Panc1 (cell line): ENCODE measurements at regions of chr12 and their contacts with region 1.

Region 1: GRCh38 chr12:56468216-56469006 is at the start of gene SPRYD4:
- DNase-seq: peak; percentile 59
- ATAC-seq: peak; percentile 97
- H3K4me3 ChIP-seq: peak within 1 kb of the TSS; percentile 98 to 100
- H3K27ac ChIP-seq: peak within 1 kb of the TSS; percentile 100
- H3K4me1 ChIP-seq: peaks cover 9% of the 10 kb centered on the region
- H3K27me3 ChIP-seq: no peaks in the 10 kb centered on the region
- CTCF ChIP-seq: peak; percentile 78; the same call in 1 of the 2 replicates
- total RNA-seq, gene SPRYD4: 3.7 TPM

Region 2: GRCh38 chr12:56189176-56189917 is 279.1 kb before region 1 on chr12 and contains the start of gene SMARCC2:
- CTCF ChIA-PET with region 1: interaction called, 19 read pairs
- POLR2A ChIA-PET with region 1: no interaction called
- in situ Hi-C with region 1: no loop called
- intact Hi-C with region 1: no loop called
- DNase-seq: peak; percentile 64
- ATAC-seq: peak; percentile 91
- H3K4me3 ChIP-seq: peak within 1 kb of the TSS; percentile 77 to 98
- H3K27ac ChIP-seq: peak within 1 kb of the TSS; percentile 95
- H3K4me1 ChIP-seq: peaks cover 12% of the 10 kb centered on the region
- H3K27me3 ChIP-seq: no peaks in the 10 kb centered on the region
- CTCF ChIP-seq: peak; percentile 99
- total RNA-seq, gene SMARCC2: 129 TPM

Region 3: GRCh38 chr12:56258057-56258819 is 210.2 kb before region 1 on chr12 and contains the start of gene ANKRD52:
- CTCF ChIA-PET with region 1: no interaction called
- POLR2A ChIA-PET with region 1: no interaction called
- in situ Hi-C with region 1: no loop called
- intact Hi-C with region 1: no loop called
- DNase-seq: no peak
- ATAC-seq: peak; percentile 95
- H3K4me3 ChIP-seq: peak within 1 kb of the TSS; percentile 72 to 87
- H3K27ac ChIP-seq: peak within 1 kb of the TSS; percentile 86
- H3K4me1 ChIP-seq: peaks cover 10% of the 10 kb centered on the region
- H3K27me3 ChIP-seq: no peaks in the 10 kb centered on the region
- CTCF ChIP-seq: peak; percentile 97
- total RNA-seq, gene ANKRD52: 67.5 TPM

Region 4: GRCh38 chr12:56315622-56316473 is 152.6 kb before region 1 on chr12 and contains the start of gene CNPY2:
- CTCF ChIA-PET with region 1: interaction called, 5 read pairs
- POLR2A ChIA-PET with region 1: no interaction called
- in situ Hi-C with region 1: no loop called
- intact Hi-C with region 1: loop called (anchors 5 kb)
- DNase-seq: peak; percentile 99
- ATAC-seq: peak; percentile 97
- H3K4me3 ChIP-seq: peak within 1 kb of the TSS; percentile 85 to 97
- H3K27ac ChIP-seq: peak within 1 kb of the TSS; percentile 97
- H3K4me1 ChIP-seq: peaks cover 4% of the 10 kb centered on the region
- H3K27me3 ChIP-seq: no peaks in the 10 kb centered on the region
- CTCF ChIP-seq: no peak; the same call in 1 of the 2 replicates
- total RNA-seq, gene CNPY2: 115 TPM

Region 5: GRCh38 chr12:56359851-56360767 is 108.3 kb before region 1 on chr12 and contains the start of gene STAT2:
- CTCF ChIA-PET with region 1: interaction called, 4 read pairs
- POLR2A ChIA-PET with region 1: no interaction called
- in situ Hi-C with region 1: no loop called
- intact Hi-C with region 1: loop called (anchors 10 kb)
- DNase-seq: peak; percentile 99
- ATAC-seq: peak; percentile 99
- H3K4me3 ChIP-seq: peak within 1 kb of the TSS; percentile 87 to 95
- H3K27ac ChIP-seq: peak within 1 kb of the TSS; percentile 96
- H3K4me1 ChIP-seq: peaks cover 8% of the 10 kb centered on the region
- H3K27me3 ChIP-seq: no peaks in the 10 kb centered on the region
- CTCF ChIP-seq: no peak
- total RNA-seq, gene STAT2: 50.4 TPM

Region 6: DNA sequence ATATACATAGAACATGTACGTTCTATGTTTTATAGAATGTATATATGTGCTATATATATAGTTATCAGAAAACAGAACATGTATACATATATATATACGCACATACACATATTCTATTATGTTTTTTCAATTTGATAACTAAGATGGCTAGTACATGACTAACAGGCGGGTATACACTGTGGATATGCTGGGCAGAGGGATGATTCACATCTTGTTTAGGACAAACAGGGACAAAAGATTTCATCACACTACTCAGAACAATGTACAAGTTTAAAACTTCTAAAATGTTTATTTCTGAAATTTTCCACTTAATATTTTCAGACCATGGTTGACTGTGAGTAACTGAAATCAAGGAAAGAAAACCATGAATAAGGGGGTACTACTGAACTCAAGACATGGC is 36.6 kb before region 1 on chr12:
- CTCF ChIA-PET with region 1: interaction called, 3 read pairs
- POLR2A ChIA-PET with region 1: interaction called, 10 read pairs
- in situ Hi-C with region 1: no loop called
- intact Hi-C with region 1: no loop called
- DNase-seq: no peak
- ATAC-seq: no peak
- H3K4me3 ChIP-seq: no peak overlapping the region
- H3K27ac ChIP-seq: no peak overlapping the region
- H3K4me1 ChIP-seq: no peaks in the 10 kb centered on the region
- H3K27me3 ChIP-seq: no peaks in the 10 kb centered on the region
- CTCF ChIP-seq: no peak

Region 7: GRCh38 chr12:56448860-56449621 is 19.4 kb before region 1 on chr12 and contains the start of gene TIMELESS:
- CTCF ChIA-PET with region 1: interaction called, 12 read pairs
- POLR2A ChIA-PET with region 1: no interaction called
- in situ Hi-C with region 1: no loop called
- intact Hi-C with region 1: no loop called
- DNase-seq: peak; percentile 81
- ATAC-seq: peak; percentile 99
- H3K4me3 ChIP-seq: peak within 1 kb of the TSS; percentile 72 to 84
- H3K27ac ChIP-seq: peak within 1 kb of the TSS; percentile 99
- H3K4me1 ChIP-seq: 0 out of 2 replicates have a peak, but pooled peaks cover 5% of the 10 kb centered on the region
- H3K27me3 ChIP-seq: no peaks in the 10 kb centered on the region
- CTCF ChIP-seq: no peak
- total RNA-seq, gene TIMELESS: 46.2 TPM